ENCODE measurements at regions of chr14 and their contacts with region 1.

Region 1: GRCh38 chr14:20922474-20922873 is 31.3 kb downstream of the RNASE3 start:
- DNase-seq: no peak
- H3K4me3 ChIP-seq: no peak overlapping the region
- H3K27ac ChIP-seq: no peak overlapping the region
- H3K4me1 ChIP-seq: no peaks in the 10 kb centered on the region
- H3K27me3 ChIP-seq: no peaks in the 10 kb centered on the region
- CTCF ChIP-seq: no peak
- EP300 ChIP-seq: no peak
- POLR2A ChIP-seq: no peak
- RAD21 ChIP-seq: no peak

Region 2: GRCh38 chr14:20743256-20743959 is 179.1 kb before region 1 on chr14:
- CTCF ChIA-PET with region 1: no interaction called
- POLR2A ChIA-PET with region 1: no interaction called
- DNase-seq: no peak
- H3K4me3 ChIP-seq: no peak overlapping the region
- H3K27ac ChIP-seq: no peak overlapping the region
- H3K4me1 ChIP-seq: no peaks in the 10 kb centered on the region
- H3K27me3 ChIP-seq: no peaks in the 10 kb centered on the region
- CTCF ChIP-seq: no peak
- EP300 ChIP-seq: no peak
- POLR2A ChIP-seq: no peak
- RAD21 ChIP-seq: no peak

Region 3: GRCh38 chr14:20904393-20905029 is 18.0 kb before region 1 on chr14:
- CTCF ChIA-PET with region 1: interaction called, 17 read pairs
- POLR2A ChIA-PET with region 1: no interaction called
- DNase-seq: peak in 1 of 2 experiments; percentile 52
- H3K4me3 ChIP-seq: no peak overlapping the region
- H3K27ac ChIP-seq: no peak overlapping the region
- H3K4me1 ChIP-seq: peaks cover 0 to 3% (median 0%) of the 10 kb centered on the region in 4 experiments; a peak in 1 of 7 replicates
- H3K27me3 ChIP-seq: no peaks in the 10 kb centered on the region
- CTCF ChIP-seq: peak; percentile 52 to 59 (median 57)
- EP300 ChIP-seq: no peak
- POLR2A ChIP-seq: no peak
- RAD21 ChIP-seq: peak; percentile 61 to 67